WTC11 (cell line): ENCODE measurements at regions of chr18 and their contacts with region 1.

Region 1: DNA sequence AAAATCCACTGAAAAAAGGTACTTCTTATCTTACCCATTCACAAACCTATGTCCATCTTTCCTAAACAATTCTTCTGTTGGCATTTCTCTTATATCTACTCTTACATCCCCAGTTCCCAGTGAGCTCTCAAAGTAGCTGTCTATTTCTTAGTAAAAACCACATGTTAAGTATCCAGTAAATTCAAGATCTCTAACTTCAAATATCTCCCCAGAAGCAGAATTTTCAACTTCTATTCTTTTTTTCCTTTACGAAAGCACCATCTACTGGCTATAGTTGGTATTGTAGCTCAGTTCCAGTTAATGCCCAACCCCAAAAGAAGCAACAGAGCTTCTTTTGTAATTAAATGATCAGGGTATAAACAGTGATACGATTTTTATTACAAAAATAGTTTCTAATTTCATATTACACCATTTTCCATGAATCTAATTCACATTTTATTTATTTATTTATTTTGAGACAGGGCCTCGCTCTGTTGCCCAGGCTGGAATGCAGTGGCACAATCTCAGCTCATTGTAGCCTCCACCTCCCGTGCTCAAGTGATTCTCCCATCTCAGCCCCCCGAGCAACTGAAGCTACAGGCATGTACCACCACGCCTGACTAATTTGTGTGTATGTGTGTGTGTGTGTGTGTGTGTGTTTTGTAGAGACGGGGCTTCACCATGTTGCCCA is 28.5 kb downstream of the HRH4 start:
- DNase-seq: no peak
- ATAC-seq: no peak
- H3K4me3 Mint-ChIP-seq: no peak overlapping the region
- H3K27ac Mint-ChIP-seq: no peak overlapping the region
- H3K4me1 Mint-ChIP-seq: peaks cover 2% of the 10 kb centered on the region; the same call in 1 of the 2 replicates
- H3K27me3 Mint-ChIP-seq: no peaks in the 10 kb centered on the region; the same call in 1 of the 2 replicates
- CTCF ChIP-seq: peak; percentile 77

Region 2: DNA sequence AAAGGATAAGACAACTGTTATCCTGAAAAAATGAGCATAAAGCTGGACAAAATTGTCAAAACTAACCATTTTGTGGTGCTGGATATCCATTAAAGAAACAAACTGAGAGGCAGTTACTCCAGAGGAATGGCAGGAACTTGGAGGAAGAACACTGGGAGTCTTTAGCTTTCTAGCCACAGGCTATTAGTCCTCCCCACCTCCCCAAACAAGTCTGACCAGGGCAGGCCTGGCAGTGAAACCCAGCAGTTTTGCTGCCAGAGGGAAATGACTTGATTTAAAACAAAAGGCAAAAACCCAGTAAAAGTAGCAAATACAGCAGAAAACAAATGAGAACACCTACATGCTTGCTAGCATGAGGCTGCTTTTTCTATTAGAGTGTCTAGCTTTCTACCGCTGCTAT is 126.2 kb before region 1 on chr18:
- CTCF ChIA-PET with region 1: interaction called, 42 read pairs
- POLR2A ChIA-PET with region 1: no interaction called
- DNase-seq: no peak
- ATAC-seq: peak; percentile 54
- H3K4me3 Mint-ChIP-seq: no peak overlapping the region
- H3K27ac Mint-ChIP-seq: peak overlapping the region; percentile 93
- H3K4me1 Mint-ChIP-seq: peaks cover 22% of the 10 kb centered on the region
- H3K27me3 Mint-ChIP-seq: no peaks in the 10 kb centered on the region
- CTCF ChIP-seq: no peak

Region 3: DNA sequence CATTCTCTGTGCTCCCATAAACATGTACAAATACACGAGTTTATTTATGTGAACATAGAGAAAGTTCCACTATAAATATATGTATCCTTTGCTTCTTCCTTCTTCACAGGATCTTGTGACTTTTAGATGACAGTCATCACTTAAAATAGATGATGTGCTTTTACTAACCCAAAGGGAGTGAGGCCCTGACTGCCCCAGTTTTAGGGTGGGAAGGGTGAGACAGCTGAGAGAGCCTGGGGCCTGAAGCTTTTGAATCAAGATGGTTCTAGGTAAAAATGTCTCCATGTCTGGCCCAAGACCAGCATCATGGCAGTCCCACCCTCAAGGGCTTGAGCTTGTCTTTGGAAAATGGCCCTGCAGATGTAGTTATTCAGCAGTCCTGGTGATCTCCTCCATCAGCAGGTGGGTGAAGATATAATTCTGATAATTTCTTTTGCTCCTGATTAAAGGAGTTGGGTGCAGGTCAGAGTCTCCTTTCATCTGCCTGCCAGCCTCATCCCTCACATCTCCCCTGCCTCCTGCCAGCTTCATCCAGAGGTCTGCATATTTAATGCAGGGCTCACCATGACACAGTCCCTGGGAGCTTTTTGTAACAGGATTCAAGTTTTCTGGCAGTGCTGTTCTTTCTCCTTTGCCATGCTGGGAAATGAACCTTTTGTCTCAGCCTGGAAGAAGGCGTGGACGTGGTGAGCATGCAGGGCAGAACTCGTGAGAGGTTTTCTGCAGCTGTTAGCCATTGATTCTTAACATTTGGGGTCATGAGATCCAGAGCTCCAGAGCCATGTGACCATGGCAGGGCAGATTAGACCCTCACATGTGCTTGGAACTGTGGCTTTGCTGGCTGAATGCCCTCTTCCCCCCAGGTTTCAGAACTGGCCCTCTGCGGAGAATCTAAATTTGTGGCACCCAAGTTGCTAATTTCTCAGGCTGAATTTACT is 25.9 kb before region 1 on chr18:
- CTCF ChIA-PET with region 1: interaction called, 19 read pairs
- POLR2A ChIA-PET with region 1: no interaction called
- DNase-seq: no peak
- ATAC-seq: peak; percentile 32; the same call in 1 of the 2 replicates
- H3K4me3 Mint-ChIP-seq: no peak overlapping the region
- H3K27ac Mint-ChIP-seq: peak overlapping the region; percentile 59; the same call in 1 of the 2 replicates
- H3K4me1 Mint-ChIP-seq: peaks cover 9% of the 10 kb centered on the region
- H3K27me3 Mint-ChIP-seq: no peaks in the 10 kb centered on the region
- CTCF ChIP-seq: no peak

Region 4: DNA sequence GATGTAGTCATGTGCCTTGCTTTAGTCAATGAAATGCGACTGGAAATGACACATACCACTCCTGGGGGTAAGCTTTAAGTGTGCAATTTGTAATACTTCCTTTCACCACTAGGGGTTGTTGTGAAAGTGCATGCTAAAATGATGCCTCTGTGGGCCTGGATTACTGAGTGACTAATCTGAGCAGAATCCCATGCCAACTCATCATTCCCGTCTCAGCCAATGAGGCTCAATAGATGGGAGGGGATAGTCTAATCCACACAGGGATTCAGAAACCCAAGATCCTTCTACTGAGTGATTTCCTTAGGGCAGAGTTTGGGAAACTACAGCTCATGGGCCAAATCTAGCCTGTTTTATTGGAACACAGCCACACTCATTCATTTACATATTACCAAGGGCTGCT is 25.5 kb after region 1 on chr18:
- CTCF ChIA-PET with region 1: interaction called, 54 read pairs
- POLR2A ChIA-PET with region 1: no interaction called
- DNase-seq: no peak
- ATAC-seq: peak; percentile 95
- H3K4me3 Mint-ChIP-seq: no peak overlapping the region
- H3K27ac Mint-ChIP-seq: no peak overlapping the region
- H3K4me1 Mint-ChIP-seq: no peaks in the 10 kb centered on the region
- H3K27me3 Mint-ChIP-seq: no peaks in the 10 kb centered on the region
- CTCF ChIP-seq: no peak

Region 5: DNA sequence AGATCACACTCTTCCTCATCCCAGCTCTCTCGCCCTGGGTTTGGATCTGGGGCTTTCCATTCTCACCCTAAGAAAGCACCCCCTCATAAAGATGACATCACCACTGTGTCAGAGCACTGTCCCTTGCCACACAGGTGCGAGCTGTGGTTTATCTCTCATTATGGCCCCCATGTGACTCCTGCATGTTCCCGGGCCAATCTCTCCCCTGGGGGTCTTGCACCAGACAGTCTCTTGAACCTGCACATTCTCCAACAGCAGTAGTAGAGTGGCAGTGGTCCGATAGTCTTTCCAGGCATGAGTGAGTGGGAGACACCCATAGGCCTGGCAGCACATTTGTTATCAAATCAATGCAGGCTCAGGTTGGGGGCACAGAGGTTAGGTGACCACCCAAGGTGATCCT is 102.0 kb after region 1 on chr18:
- CTCF ChIA-PET with region 1: no interaction called
- POLR2A ChIA-PET with region 1: no interaction called
- DNase-seq: no peak
- ATAC-seq: no peak
- H3K4me3 Mint-ChIP-seq: no peak overlapping the region
- H3K27ac Mint-ChIP-seq: no peak overlapping the region
- H3K4me1 Mint-ChIP-seq: peaks cover 12% of the 10 kb centered on the region
- H3K27me3 Mint-ChIP-seq: no peaks in the 10 kb centered on the region
- CTCF ChIP-seq: no peak

Region 6: GRCh38 chr18:24726727-24727492 is 238.0 kb after region 1 on chr18:
- CTCF ChIA-PET with region 1: interaction called, 25 read pairs
- POLR2A ChIA-PET with region 1: no interaction called
- DNase-seq: peak; percentile 71
- ATAC-seq: peak; percentile 77
- H3K4me3 Mint-ChIP-seq: no peak overlapping the region
- H3K27ac Mint-ChIP-seq: no peak overlapping the region
- H3K4me1 Mint-ChIP-seq: peaks cover 8% of the 10 kb centered on the region
- H3K27me3 Mint-ChIP-seq: no peaks in the 10 kb centered on the region; the same call in 1 of the 2 replicates
- CTCF ChIP-seq: peak; percentile 77